ENCODE measurements at regions of chr6 and their contacts with region 1.

Region 1: GRCh38 chr6:43838276-43839036 is 68.4 kb downstream of the VEGFA start:
- DNase-seq: peak; percentile 73 to 90 (median 86)
- H3K4me3 ChIP-seq: no peak overlapping the region
- H3K27ac ChIP-seq: peak overlapping the region in 4 of 5 donors; percentile 58 to 89 (median 79)
- H3K4me1 ChIP-seq: peaks cover 9 to 20% of the 10 kb centered on the region in 2 donors
- H3K27me3 ChIP-seq: no peaks in the 10 kb centered on the region
- CTCF ChIP-seq: peak; percentile 39 to 76 (median 62)
- POLR2A ChIP-seq: peak in 1 of 2 donors; percentile 64

Region 2: GRCh38 chr6:44074439-44075136 is 236.1 kb after region 1 on chr6:
- intact Hi-C with region 1: loop called in 1 of 2 experiments (anchors 10 kb)
- DNase-seq: peak; percentile 68 to 87 (median 78)
- H3K4me3 ChIP-seq: no peak overlapping the region
- H3K27ac ChIP-seq: peak overlapping the region in 1 of 5 donors; percentile 76
- H3K4me1 ChIP-seq: peaks cover 8 to 19% of the 10 kb centered on the region in 2 donors
- H3K27me3 ChIP-seq: no peaks in the 10 kb centered on the region
- CTCF ChIP-seq: peak; percentile 88 to 96 (median 91)
- POLR2A ChIP-seq: no peak